ENCODE measurements at regions of chr16 and their contacts with region 1.

Region 1: GRCh38 chr16:73878611-73879010 is 418.0 kb upstream of the PSMD7 start:
- ATAC-seq: peak; percentile 59 to 79 (median 72)
- H3K4me3 ChIP-seq: no peak overlapping the region
- H3K27ac ChIP-seq: no peak overlapping the region
- H3K4me1 ChIP-seq: peaks cover 22 to 92% of the 10 kb centered on the region in 2 donors

Region 2: DNA sequence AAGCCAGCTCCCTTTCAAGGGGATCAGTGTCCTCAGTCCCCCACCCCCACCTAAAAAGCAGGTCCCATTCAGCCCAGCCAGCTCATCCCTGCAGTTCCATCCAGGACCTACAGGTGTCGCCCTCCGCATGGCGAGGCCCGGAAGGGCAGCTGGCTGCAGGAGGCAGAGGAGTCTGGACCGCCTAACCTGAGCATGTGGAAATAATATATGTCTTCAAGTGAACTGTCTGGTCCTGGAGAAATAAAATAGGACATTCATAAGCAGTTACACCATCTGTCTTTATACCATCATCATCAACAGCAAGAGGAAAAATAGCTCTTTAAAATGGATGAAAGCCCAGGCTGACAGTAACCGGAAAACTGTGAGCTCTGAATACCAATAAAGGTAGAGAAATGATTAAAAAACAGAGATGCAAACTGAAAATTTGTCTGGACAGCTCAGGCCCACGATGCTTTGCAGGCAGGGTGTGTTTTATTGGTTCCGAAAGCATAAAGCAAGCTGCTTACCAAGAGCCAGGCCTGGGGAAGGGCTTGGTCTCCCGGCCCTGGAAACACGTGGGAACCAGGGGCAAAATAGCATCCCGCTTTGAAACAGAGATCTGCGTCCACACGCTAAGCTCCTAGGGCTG is 1045.9 kb before region 1 on chr16:
- in situ Hi-C with region 1: loop called in 1 of 9 experiments (anchors 25 kb)
- ATAC-seq: peak; percentile 82 to 97 (median 90)
- H3K4me3 ChIP-seq: no peak overlapping the region
- H3K27ac ChIP-seq: peak overlapping the region; percentile 4 to 36
- H3K4me1 ChIP-seq: peaks cover 41 to 43% of the 10 kb centered on the region in 2 donors

Region 3: GRCh38 chr16:73058221-73058615 is 820.4 kb before region 1 on chr16:
- in situ Hi-C with region 1: loop called in 4 of 9 experiments (anchors 25 kb)
- ATAC-seq: peak in 7 of 8 experiments; percentile 1 to 52 (median 15)
- H3K4me3 ChIP-seq: peak overlapping the region; percentile 56 to 95 (median 86)
- H3K27ac ChIP-seq: peak overlapping the region; percentile 91 to 94
- H3K4me1 ChIP-seq: peaks cover 16 to 46% of the 10 kb centered on the region in 2 donors

Region 4: GRCh38 chr16:73565262-73565661 is 313.3 kb before region 1 on chr16:
- in situ Hi-C with region 1: loop called in 1 of 9 experiments (anchors 25 kb)
- ATAC-seq: peak in 2 of 8 experiments; percentile 28 to 38
- H3K4me3 ChIP-seq: no peak overlapping the region
- H3K27ac ChIP-seq: no peak overlapping the region
- H3K4me1 ChIP-seq: peaks cover 7 to 12% of the 10 kb centered on the region in 2 donors

Region 5: GRCh38 chr16:74034862-74035261 is 156.3 kb after region 1 on chr16:
- in situ Hi-C with region 1: loop called in 1 of 9 experiments (anchors 25 kb)
- ATAC-seq: peak; percentile 35 to 71 (median 56)
- H3K4me3 ChIP-seq: no peak overlapping the region
- H3K27ac ChIP-seq: no peak overlapping the region
- H3K4me1 ChIP-seq: peaks cover 50 to 67% of the 10 kb centered on the region in 2 donors